ENCODE measurements at regions of chr2 and their contacts with region 1.

Region 1: GRCh38 chr2:190319555-190320498 is at the start of gene HIBCH:
- DNase-seq: peak; percentile 71 to 87 (median 74)
- H3K4me3 ChIP-seq: peak within 1 kb of the TSS; percentile 62 to 75
- H3K4me3 Mint-ChIP-seq: peak within 1 kb of the TSS; percentile 96 to 100 (median 99)
- H3K27ac ChIP-seq: peak within 1 kb of the TSS; percentile 77
- H3K27ac Mint-ChIP-seq: peak within 1 kb of the TSS; percentile 90 to 100 (median 98)
- H3K4me1 ChIP-seq: peaks cover 22% of the 10 kb centered on the region
- H3K4me1 Mint-ChIP-seq: peaks cover 28 to 54% (median 43%) of the 10 kb centered on the region in 4 donors
- H3K27me3 ChIP-seq: no peaks in the 10 kb centered on the region
- H3K27me3 Mint-ChIP-seq: peaks cover 1 to 2% of the 10 kb centered on the region in 2 donors
- total RNA-seq, gene HIBCH: 20.0 to 22.3 TPM

Region 2: GRCh38 chr2:189762551-189763298 is 557.1 kb before region 1 on chr2 and contains the start of gene OSGEPL1:
- CTCF ChIA-PET with region 1: no interaction called
- POLR2A ChIA-PET with region 1: no interaction called
- intact Hi-C with region 1: loop called (anchors 5 kb)
- DNase-seq: peak; percentile 89 to 98 (median 91)
- H3K4me3 ChIP-seq: peak within 1 kb of the TSS; percentile 87 to 94
- H3K4me3 Mint-ChIP-seq: peak within 1 kb of the TSS; percentile 90 to 99 (median 95)
- H3K27ac ChIP-seq: peak within 1 kb of the TSS; percentile 88
- H3K27ac Mint-ChIP-seq: peak within 1 kb of the TSS; percentile 95 to 99 (median 97)
- H3K4me1 ChIP-seq: peaks cover 13% of the 10 kb centered on the region
- H3K4me1 Mint-ChIP-seq: peaks cover 4 to 15% (median 5%) of the 10 kb centered on the region in 4 donors
- H3K27me3 ChIP-seq: no peaks in the 10 kb centered on the region
- H3K27me3 Mint-ChIP-seq: no peaks in the 10 kb centered on the region
- total RNA-seq, gene OSGEPL1: 19.1 TPM

Region 3: DNA sequence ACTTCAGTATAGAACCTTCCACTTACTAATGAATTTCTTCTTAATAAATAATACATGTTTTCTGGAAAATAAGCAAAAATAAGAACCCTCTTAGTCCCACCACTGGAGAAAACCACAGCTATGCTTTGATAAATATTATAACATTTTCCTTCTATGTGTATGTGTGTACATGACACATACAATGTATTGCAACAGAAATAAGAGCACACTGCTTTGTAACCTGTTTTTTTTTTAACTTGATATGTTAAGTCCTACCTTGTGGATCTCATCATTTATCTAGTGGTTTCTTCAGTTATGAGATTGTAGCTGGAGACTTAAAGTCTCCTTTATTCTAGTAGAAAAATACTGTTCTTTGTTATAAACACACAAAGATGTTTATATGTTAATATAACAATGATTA is 40.7 kb after region 1 on chr2:
- CTCF ChIA-PET with region 1: interaction called, 13 read pairs
- POLR2A ChIA-PET with region 1: interaction called, 14 read pairs
- intact Hi-C with region 1: no loop called
- DNase-seq: no peak
- H3K4me3 ChIP-seq: peak overlapping the region; percentile 49 to 66
- H3K4me3 Mint-ChIP-seq: peak overlapping the region; percentile 90 to 97 (median 94)
- H3K27ac ChIP-seq: peak overlapping the region; percentile 47
- H3K27ac Mint-ChIP-seq: peak overlapping the region; percentile 85 to 99 (median 94)
- H3K4me1 ChIP-seq: peaks cover 27% of the 10 kb centered on the region
- H3K4me1 Mint-ChIP-seq: peaks cover 14 to 36% (median 26%) of the 10 kb centered on the region in 4 donors
- H3K27me3 ChIP-seq: no peaks in the 10 kb centered on the region
- H3K27me3 Mint-ChIP-seq: no peaks in the 10 kb centered on the region

Region 4: DNA sequence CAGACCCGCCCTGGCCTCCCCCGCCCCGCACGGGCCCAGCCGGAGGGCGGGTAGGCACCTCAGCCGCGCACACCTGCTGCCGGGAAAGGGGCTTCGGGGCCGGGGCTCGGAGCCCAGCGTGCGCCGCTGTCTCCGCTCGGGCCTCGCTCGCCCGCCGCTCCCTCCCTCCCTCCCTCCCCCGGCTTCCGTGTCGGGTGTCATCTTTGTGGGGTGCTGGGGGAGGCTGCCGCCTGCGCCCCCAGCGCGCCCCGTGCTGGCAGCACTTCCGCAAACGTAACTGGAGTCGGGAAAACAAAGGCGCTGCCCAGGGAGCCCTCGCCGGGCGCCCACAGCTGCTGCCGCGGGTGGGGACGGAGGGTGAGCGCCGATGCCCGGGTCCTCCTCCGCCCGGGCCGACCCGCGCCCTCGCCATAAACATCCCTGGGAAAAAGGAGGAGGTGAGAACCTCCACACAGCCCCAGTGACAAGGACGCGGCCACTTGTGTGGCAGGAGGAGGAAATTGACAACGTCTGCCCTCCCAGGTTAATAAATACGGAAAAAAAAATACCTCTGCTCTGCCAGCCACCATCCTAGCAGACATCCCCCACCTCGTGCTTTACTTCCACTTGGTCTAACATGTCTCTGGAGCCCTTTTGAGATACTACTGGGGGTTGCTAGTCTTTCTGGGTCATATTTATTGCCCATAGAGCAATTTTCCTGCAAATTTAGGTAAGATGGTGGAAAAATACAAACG is 88.9 kb after region 1 on chr2:
- CTCF ChIA-PET with region 1: no interaction called
- POLR2A ChIA-PET with region 1: interaction called, 8 read pairs
- intact Hi-C with region 1: loop called (anchors 1 kb)
- DNase-seq: peak; percentile 78 to 86 (median 84)
- H3K4me3 ChIP-seq: peak overlapping the region; percentile 67 to 78
- H3K4me3 Mint-ChIP-seq: peak overlapping the region; percentile 89 to 95 (median 92)
- H3K27ac ChIP-seq: peak overlapping the region; percentile 96
- H3K27ac Mint-ChIP-seq: peak overlapping the region; percentile 96 to 99 (median 98)
- H3K4me1 ChIP-seq: peaks cover 54% of the 10 kb centered on the region
- H3K4me1 Mint-ChIP-seq: peaks cover 37 to 52% (median 41%) of the 10 kb centered on the region in 4 donors
- H3K27me3 ChIP-seq: no peaks in the 10 kb centered on the region
- H3K27me3 Mint-ChIP-seq: no peaks in the 10 kb centered on the region

Region 5: DNA sequence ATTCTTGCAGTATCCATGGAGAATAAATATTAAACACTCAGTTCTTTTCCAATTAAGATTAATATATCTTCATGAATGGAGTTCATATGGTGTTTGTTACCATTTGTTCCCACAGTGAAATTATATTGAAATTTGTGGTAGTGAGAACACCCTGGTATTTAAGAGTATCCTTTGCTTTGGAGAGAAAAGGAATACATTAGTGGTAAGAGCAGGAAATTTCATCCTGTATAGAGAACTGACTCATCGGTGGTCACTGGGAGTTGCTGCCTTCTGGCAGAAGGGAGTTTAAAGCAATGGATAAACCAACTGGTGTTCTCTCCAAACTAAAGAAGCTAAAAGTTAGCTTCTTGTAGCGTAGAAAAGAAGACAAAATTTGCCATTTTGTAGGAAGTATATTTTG is 1032.7 kb after region 1 on chr2:
- CTCF ChIA-PET with region 1: no interaction called
- POLR2A ChIA-PET with region 1: no interaction called
- intact Hi-C with region 1: no loop called
- DNase-seq: no peak
- H3K4me3 ChIP-seq: no peak overlapping the region
- H3K4me3 Mint-ChIP-seq: no peak overlapping the region
- H3K27ac ChIP-seq: no peak overlapping the region
- H3K27ac Mint-ChIP-seq: no peak overlapping the region
- H3K4me1 ChIP-seq: no peaks in the 10 kb centered on the region
- H3K4me1 Mint-ChIP-seq: no peaks in the 10 kb centered on the region
- H3K27me3 ChIP-seq: no peaks in the 10 kb centered on the region
- H3K27me3 Mint-ChIP-seq: peaks cover 6 to 7% of the 10 kb centered on the region in 2 donors

Measured in CD4-positive, alpha-beta memory T cell (primary cell).